Activated naive CD4-positive, alpha-beta T cell treated with anti-CD3 and anti-CD28 coated beads for 36 hours (primary cell): ENCODE measurements at regions of chr21 and their contacts with region 1.

Region 1: GRCh38 chr21:36927719-36928117 is 38.8 kb downstream of the HLCS start:
- DNase-seq: peak; percentile 87
- H3K4me3 Mint-ChIP-seq: no peak overlapping the region
- H3K27ac Mint-ChIP-seq: no peak overlapping the region
- H3K4me1 Mint-ChIP-seq: peaks cover 8% of the 10 kb centered on the region
- H3K27me3 Mint-ChIP-seq: no peaks in the 10 kb centered on the region

Region 2: DNA sequence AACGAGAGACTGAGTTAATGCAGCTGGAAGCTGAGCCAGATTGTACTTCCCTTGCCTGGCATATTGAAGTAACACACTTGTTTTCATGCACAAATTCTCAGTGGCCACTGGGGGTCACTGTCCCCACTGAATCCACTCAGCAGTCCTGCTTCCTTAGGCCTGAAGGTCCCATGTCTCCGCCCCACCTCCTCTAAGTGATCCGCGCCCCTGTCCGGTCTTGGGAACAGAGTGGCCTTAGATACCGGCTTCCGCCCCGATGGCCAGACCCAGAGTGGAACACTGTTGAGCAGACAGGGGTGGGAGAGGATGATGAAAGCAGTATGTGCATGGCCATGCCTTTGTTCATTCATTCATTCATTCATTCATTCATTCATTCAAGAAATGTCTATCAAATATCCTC is 507.7 kb before region 1 on chr21:
- CTCF ChIA-PET with region 1: no interaction called
- intact Hi-C with region 1: loop called (anchors 1 kb)
- DNase-seq: peak; percentile 66
- H3K4me3 Mint-ChIP-seq: no peak overlapping the region
- H3K27ac Mint-ChIP-seq: no peak overlapping the region
- H3K4me1 Mint-ChIP-seq: no peaks in the 10 kb centered on the region
- H3K27me3 Mint-ChIP-seq: no peaks in the 10 kb centered on the region

Region 3: DNA sequence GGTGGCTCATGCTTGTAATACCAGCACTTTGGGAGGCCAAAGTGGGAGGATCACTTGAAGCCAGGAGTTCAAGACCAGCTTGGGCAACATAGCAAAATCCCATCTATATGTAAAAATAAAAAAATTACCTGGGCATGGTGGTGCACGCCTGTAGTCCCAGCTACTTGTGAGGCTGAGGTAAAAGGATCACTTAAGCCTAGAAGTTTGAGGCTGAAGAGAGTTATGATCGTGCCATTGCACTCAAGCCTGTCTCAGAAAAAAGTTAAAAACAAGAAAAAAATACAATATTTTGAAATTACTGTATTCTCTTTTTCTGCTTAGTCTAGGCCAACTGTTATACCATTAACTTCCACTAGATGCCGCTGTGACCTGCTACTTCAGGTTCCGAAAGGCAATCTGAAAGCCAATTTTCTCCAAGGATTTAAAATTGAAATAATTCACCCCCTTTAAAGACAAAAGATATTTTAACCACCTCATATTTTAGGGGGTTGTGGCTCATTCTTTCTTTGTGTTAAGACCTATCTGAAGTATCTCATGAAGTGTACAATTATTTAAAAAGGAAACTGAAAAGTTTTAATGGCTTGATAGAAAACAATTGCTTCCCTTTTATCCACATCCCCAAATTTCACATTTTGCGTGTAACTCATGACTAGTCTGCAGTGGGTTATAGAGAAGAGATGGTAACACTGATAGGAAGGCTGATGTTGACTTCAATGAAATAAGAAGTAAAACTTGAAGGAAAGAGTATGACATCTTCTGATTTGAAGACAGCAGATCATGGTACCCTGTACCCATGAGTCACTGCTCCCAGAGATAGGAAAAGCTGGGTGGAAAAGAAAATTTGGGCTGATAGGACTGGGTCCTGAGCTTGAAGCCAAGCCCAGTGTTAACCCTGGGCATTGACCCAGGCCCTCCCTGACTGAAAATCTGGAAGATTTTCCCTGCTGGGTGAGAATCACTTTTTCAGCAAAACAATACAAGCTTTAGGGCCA is 423.4 kb before region 1 on chr21:
- CTCF ChIA-PET with region 1: interaction called, 9 read pairs
- intact Hi-C with region 1: loop called (anchors 1 kb)
- DNase-seq: peak; percentile 63
- H3K4me3 Mint-ChIP-seq: no peak overlapping the region
- H3K27ac Mint-ChIP-seq: no peak overlapping the region
- H3K4me1 Mint-ChIP-seq: no peaks in the 10 kb centered on the region
- H3K27me3 Mint-ChIP-seq: no peaks in the 10 kb centered on the region

Region 4: DNA sequence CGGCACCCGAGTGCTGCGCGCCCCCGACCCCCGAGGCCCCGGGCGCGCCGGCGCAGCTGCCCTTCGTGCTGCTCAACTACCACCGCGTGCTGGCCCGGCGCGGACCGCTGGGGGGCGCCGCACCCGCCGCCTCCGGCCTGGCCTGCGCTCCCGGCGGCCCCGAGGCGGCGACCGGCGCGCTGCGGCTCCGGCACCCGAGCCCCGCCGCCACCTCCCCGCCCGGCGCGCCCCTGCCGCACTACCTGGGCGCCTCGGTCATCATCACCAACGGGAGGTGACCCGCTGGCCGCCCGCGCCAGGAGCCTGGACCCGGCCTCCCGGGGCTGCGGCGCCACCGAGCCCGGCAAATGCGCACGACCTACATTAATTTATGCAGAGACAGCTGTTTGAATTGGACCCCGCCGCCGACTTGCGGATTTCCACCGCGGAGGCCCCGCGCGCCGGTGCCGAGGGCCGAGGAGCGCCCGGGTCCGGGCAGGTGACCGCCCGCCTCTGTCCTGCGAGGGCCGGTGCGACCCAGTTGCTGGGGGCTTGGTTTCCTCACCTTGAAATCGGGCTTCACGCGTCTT is 179.8 kb before region 1 on chr21:
- CTCF ChIA-PET with region 1: interaction called, 3 read pairs
- intact Hi-C with region 1: loop called (anchors 1 kb)
- DNase-seq: peak; percentile 57
- H3K4me3 Mint-ChIP-seq: no peak overlapping the region
- H3K27ac Mint-ChIP-seq: no peak overlapping the region
- H3K4me1 Mint-ChIP-seq: peaks cover 10% of the 10 kb centered on the region
- H3K27me3 Mint-ChIP-seq: peaks cover 40% of the 10 kb centered on the region

Region 5: DNA sequence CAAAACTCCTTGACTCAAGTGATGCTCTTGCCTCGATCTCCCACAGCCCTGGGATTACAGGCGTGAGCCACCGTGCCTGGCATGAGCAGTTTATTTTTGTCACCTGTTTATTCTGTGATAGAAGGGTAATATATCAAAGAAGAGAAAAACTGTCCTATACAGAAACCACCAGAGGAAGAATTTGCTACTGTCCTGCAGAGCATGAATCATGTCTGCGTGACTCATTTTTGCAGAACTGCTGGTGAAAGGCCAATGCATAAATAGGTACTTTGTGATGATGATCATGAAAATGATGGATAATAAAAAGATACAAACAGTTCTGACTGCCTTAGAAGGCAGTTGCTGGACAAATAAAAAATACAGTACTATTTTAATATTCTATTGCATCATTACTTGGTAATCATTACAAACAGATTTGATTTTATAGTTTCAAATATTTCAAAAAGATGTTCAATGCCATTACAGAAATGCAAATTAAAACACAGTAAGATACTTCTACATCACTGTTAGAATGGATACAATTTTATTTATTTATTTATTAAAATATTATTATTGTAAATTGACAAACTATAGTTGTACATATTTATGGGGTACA is 105.3 kb after region 1 on chr21:
- CTCF ChIA-PET with region 1: no interaction called
- intact Hi-C with region 1: no loop called
- DNase-seq: no peak
- H3K4me3 Mint-ChIP-seq: no peak overlapping the region
- H3K27ac Mint-ChIP-seq: no peak overlapping the region
- H3K4me1 Mint-ChIP-seq: no peaks in the 10 kb centered on the region
- H3K27me3 Mint-ChIP-seq: peaks cover 3% of the 10 kb centered on the region